ENCODE measurements at regions of chr2 and their contacts with region 1.

Region 1: GRCh38 chr2:152525277-152525838 is 190.4 kb downstream of the FMNL2 start:
- DNase-seq: no peak
- H3K4me3 ChIP-seq: no peak overlapping the region
- H3K27me3 ChIP-seq: no peaks in the 10 kb centered on the region
- CTCF ChIP-seq: no peak

Region 2: GRCh38 chr2:152513681-152514080 is 11.7 kb before region 1 on chr2:
- CTCF ChIA-PET with region 1: interaction called, 11 read pairs
- POLR2A ChIA-PET with region 1: no interaction called
- DNase-seq: no peak
- H3K4me3 ChIP-seq: no peak overlapping the region
- H3K27me3 ChIP-seq: no peaks in the 10 kb centered on the region
- CTCF ChIP-seq: no peak